Sciatic nerve (tissue), 2 donors: ENCODE measurements at regions of chr9 and their contacts with region 1.

Region 1: GRCh38 chr9:92790542-92791527 is 26.2 kb upstream of the BICD2 start:
- DNase-seq: peak; percentile 87
- ATAC-seq: peak; percentile 95

Region 2: GRCh38 chr9:92140074-92140753 is 650.6 kb before region 1 on chr9:
- intact Hi-C with region 1: loop called (anchors 10 kb)
- DNase-seq: peak; percentile 87
- ATAC-seq: peak; percentile 75

Region 3: GRCh38 chr9:92716557-92716956 is 74.3 kb before region 1 on chr9:
- intact Hi-C with region 1: loop called (anchors 5 kb)
- DNase-seq: peak; percentile 86
- ATAC-seq: peak; percentile 62